WTC11 (cell line): ENCODE measurements at regions of chr11 and their contacts with region 1.

Region 1: DNA sequence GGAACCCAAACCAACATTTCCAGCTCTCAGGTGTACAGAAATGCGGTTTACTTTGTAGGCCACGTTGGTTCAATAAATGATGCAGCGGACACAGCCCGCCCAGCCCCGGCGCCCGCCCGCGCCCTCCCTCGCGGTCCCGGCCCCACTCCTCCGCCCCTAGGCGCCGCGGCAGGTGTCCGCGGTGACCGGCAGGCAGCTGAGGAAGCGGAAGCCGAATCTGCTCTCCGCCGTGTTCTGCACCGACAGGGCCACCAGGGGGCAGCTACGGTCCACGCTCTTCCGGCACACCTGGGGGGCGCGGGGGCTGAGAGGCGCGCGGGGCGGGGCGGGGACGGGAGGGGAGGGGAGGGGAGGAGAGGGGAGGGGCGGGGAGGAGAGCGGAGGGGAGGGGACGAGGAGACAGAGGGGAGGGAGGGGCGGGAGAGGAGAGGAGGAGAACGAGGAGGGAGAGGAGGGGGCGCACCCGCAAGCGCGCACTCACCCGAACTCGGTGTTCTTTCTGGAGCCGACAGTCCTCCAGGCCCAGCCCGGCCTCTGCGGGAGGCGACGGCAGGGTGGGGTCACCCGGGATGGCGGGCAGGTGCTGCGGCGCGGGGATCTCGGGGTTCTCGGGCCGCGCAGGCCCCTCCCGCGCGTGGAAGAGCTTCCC is 5.6 kb downstream of the LMNTD2 start:
- DNase-seq: peak; percentile 85
- ATAC-seq: peak; percentile 52
- H3K4me3 Mint-ChIP-seq: peak overlapping the region; percentile 57
- H3K27ac Mint-ChIP-seq: no peak overlapping the region
- H3K4me1 Mint-ChIP-seq: peaks cover 11% of the 10 kb centered on the region
- H3K27me3 Mint-ChIP-seq: peaks cover 26% of the 10 kb centered on the region
- CTCF ChIP-seq: peak; percentile 63

Region 2: GRCh38 chr11:568306-569157 is 13.6 kb after region 1 on chr11:
- CTCF ChIA-PET with region 1: interaction called, 32 read pairs
- POLR2A ChIA-PET with region 1: interaction called, 3 read pairs
- DNase-seq: peak; percentile 95
- ATAC-seq: peak; percentile 89
- H3K4me3 Mint-ChIP-seq: peak overlapping the region; percentile 66
- H3K27ac Mint-ChIP-seq: no peak overlapping the region
- H3K4me1 Mint-ChIP-seq: peaks cover 35% of the 10 kb centered on the region
- H3K27me3 Mint-ChIP-seq: peaks cover 8% of the 10 kb centered on the region
- CTCF ChIP-seq: no peak

Region 3: DNA sequence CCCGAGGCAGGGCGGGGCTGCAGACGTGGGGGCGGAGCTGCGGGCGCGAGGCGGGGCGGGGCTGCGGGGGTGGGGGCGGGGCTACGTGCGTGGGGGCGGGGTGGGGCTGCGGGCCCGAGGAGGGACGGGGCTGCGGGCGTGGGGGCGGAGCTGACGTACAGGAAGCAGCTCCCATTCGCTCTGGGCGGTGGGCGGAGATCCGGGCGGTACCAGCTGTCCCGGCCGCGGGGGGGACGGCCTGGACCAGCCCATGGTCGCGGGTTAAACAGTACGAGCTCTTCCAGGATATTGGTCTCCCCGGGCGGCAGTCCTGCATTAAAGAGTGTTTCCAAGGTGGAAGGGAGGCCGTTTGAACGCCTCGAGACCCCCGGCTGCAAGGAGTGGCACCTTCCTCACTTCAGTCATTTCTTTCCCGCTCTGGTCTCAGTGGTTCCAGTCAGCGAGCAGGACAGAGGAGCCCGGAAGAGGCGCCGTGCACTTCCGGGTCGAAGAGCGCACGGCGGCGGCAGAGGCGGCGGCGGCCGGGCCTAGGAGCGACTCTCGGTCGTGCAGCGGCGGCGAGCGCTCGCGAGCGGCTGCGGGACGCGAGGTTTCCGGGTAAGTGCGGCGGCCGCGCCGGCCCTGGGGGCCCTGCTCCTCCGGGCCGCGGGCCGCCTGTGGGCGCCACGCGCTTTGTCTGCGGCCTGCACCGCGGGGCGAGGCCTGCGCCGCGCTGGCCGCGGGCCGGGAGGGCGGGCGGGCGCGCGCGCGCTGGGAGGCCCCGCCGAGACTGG is 21.2 kb after region 1 on chr11 and contains the start of gene PHRF1:
- CTCF ChIA-PET with region 1: interaction called, 29 read pairs
- POLR2A ChIA-PET with region 1: interaction called, 5 read pairs
- DNase-seq: peak; percentile 95
- ATAC-seq: peak; percentile 85
- H3K4me3 Mint-ChIP-seq: peak within 1 kb of the TSS; percentile 94
- H3K27ac Mint-ChIP-seq: peak within 1 kb of the TSS; percentile 100
- H3K4me1 Mint-ChIP-seq: peaks cover 35% of the 10 kb centered on the region
- H3K27me3 Mint-ChIP-seq: peaks cover 22% of the 10 kb centered on the region
- CTCF ChIP-seq: no peak
- total RNA-seq, gene PHRF1: 39.4 to 46.9 TPM (median 40.1 TPM) in 3 replicates

Region 4: DNA sequence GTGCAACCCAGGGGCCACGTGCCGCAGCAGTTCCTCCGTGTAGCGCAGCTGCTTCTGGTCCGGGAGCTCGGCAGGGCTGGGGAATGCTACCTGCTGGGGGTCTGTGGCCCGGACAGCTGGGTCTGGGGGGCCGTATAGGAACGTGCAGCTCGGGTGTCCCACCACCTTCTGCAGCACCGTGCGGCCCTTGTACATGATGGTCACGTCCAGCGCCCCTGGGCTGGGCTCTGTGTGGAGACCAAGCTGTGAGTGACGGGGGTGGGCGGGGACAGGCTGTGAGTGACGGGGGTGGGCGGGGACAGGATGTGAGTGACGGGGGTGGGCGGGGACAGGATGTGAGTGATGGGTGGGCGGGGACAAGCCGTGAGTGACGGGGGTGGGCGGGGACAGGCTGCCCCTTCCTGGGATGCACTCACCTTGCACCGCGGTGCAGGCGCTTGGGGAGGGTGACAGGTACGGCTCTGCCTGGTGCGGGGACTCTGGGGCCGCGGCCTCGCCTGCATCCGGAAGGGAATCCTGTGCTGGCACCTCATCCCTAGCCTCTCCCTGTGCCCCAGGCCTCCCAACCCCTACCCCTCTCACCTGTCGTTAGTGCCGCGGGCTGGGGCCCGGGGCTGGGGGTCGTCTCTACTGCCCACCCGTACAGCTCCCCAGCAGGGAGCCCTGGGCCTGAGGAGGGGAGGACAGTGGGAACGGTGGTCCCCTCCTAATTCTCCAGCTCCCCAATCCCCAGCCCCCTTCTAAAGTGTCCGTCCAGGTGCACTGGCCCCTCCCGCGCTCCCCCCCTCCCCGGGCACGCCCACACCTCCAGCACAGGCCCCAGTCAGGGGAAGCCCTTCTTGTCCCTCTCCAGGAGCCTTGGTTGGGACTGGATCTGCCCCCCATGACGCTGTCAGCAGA is 58.7 kb after region 1 on chr11:
- CTCF ChIA-PET with region 1: interaction called, 14 read pairs
- POLR2A ChIA-PET with region 1: no interaction called
- DNase-seq: peak; percentile 82
- ATAC-seq: peak; percentile 55
- H3K4me3 Mint-ChIP-seq: no peak overlapping the region
- H3K27ac Mint-ChIP-seq: no peak overlapping the region
- H3K4me1 Mint-ChIP-seq: 0 out of 2 replicates have a peak, but pooled peaks cover 4% of the 10 kb centered on the region
- H3K27me3 Mint-ChIP-seq: no peaks in the 10 kb centered on the region
- CTCF ChIP-seq: no peak

Region 5: GRCh38 chr11:639330-639955 is 84.5 kb after region 1 on chr11:
- CTCF ChIA-PET with region 1: interaction called, 13 read pairs
- POLR2A ChIA-PET with region 1: no interaction called
- DNase-seq: no peak
- ATAC-seq: no peak
- H3K4me3 Mint-ChIP-seq: peak overlapping the region; percentile 61
- H3K27ac Mint-ChIP-seq: no peak overlapping the region
- H3K4me1 Mint-ChIP-seq: peaks cover 21% of the 10 kb centered on the region
- H3K27me3 Mint-ChIP-seq: peaks cover 51% of the 10 kb centered on the region
- CTCF ChIP-seq: no peak

Region 6: DNA sequence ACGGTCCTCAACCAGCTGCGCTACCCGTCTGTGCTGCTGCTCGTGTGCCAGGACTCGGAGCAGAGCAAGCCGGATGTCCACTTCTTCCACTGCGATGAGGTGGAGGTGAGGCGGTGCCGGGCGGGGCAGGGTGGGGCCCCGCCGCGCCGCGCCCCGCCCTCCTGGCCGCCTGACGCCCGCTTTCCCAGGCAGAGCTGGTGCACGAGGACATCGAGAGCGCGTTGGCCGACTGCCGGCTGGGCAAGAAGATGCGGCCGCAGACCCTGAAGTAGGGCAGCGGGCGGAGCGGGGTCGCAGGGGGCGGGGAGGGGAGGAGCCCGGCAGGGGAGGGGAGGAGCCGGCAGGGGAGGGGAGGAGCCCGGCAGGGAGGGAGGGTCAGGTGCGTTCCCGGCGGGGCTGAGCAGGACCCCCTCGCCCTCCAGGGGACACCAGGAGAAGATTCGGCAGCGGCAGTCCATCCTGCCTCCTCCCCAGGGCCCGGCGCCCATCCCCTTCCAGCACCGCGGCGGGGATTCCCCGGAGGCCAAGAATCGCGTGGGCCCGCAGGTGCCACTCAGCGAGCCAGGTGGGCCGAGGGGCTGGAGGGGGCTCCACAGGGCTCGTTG is 165.8 kb after region 1 on chr11:
- CTCF ChIA-PET with region 1: interaction called, 22 read pairs
- POLR2A ChIA-PET with region 1: no interaction called
- DNase-seq: peak; percentile 87
- ATAC-seq: peak; percentile 83
- H3K4me3 Mint-ChIP-seq: peak overlapping the region; percentile 47
- H3K27ac Mint-ChIP-seq: no peak overlapping the region
- H3K4me1 Mint-ChIP-seq: peaks cover 13% of the 10 kb centered on the region
- H3K27me3 Mint-ChIP-seq: peaks cover 16% of the 10 kb centered on the region
- CTCF ChIP-seq: no peak

Region 7: GRCh38 chr11:832321-833113 is 277.6 kb after region 1 on chr11 and contains the start of gene CD151:
- CTCF ChIA-PET with region 1: interaction called, 10 read pairs
- POLR2A ChIA-PET with region 1: no interaction called
- DNase-seq: peak; percentile 70
- ATAC-seq: peak; percentile 33
- H3K4me3 Mint-ChIP-seq: peak within 1 kb of the TSS; percentile 73
- H3K27ac Mint-ChIP-seq: no peak within 1 kb of the TSS
- H3K4me1 Mint-ChIP-seq: peaks cover 40% of the 10 kb centered on the region
- H3K27me3 Mint-ChIP-seq: peaks cover 32% of the 10 kb centered on the region
- CTCF ChIP-seq: no peak
- total RNA-seq, gene CD151: 115 to 127 TPM (median 116 TPM) in 3 replicates